ENCODE measurements at regions of chr18 and their contacts with region 1.

Region 1: DNA sequence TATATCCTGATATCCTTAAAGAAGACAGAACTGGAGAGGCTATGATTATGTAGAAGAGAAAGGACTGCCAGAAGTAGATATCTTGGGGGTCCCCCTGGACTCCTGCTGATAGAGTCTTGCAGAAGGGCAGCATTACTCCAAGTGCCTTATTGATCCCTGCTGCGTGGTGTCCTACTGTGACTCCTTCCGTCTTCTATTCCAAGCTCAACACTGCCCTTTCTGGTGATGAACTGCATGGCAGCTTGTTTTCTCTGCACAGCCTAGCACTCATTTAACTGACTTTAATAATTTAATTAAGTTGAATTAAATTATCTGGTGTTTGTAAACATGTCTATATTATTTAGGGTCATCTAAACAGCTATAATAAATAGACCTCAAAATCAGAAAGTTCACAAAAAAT is 194.1 kb upstream of the DSEL start:
- DNase-seq: peak in 1 of 2 experiments; percentile 63
- H3K4me3 ChIP-seq: no peak overlapping the region
- H3K27ac ChIP-seq: no peak overlapping the region
- H3K4me1 ChIP-seq: peaks cover 0 to 3% (median 0%) of the 10 kb centered on the region in 4 experiments; a peak in 1 of 7 replicates
- H3K27me3 ChIP-seq: no peaks in the 10 kb centered on the region
- CTCF ChIP-seq: peak; percentile 28 to 67 (median 63)
- EP300 ChIP-seq: no peak
- POLR2A ChIP-seq: no peak
- RAD21 ChIP-seq: peak; percentile 74 to 81

Region 2: GRCh38 chr18:67515945-67516538 is 194.6 kb before region 1 on chr18:
- CTCF ChIA-PET with region 1: interaction called, 46 read pairs
- POLR2A ChIA-PET with region 1: interaction called, 3 read pairs
- DNase-seq: peak in 1 of 2 experiments; percentile 91
- H3K4me3 ChIP-seq: peak overlapping the region; percentile 58 to 90 (median 82)
- H3K27ac ChIP-seq: no peak overlapping the region
- H3K4me1 ChIP-seq: peaks cover 2 to 8% (median 4%) of the 10 kb centered on the region in 4 experiments; a peak in 6 of 7 replicates
- H3K27me3 ChIP-seq: no peaks in the 10 kb centered on the region
- CTCF ChIP-seq: peak; percentile 75 to 87 (median 77)
- EP300 ChIP-seq: no peak
- POLR2A ChIP-seq: 0 out of 3 replicates have a peak, but pooled peaks of 1 of the 2 experiments have one; percentile 17
- RAD21 ChIP-seq: peak; percentile 92 to 93

Region 3: GRCh38 chr18:67568166-67568565 is 142.5 kb before region 1 on chr18:
- CTCF ChIA-PET with region 1: no interaction called
- POLR2A ChIA-PET with region 1: no interaction called
- DNase-seq: no peak
- H3K4me3 ChIP-seq: no peak overlapping the region
- H3K27ac ChIP-seq: no peak overlapping the region
- H3K4me1 ChIP-seq: peaks cover 0 to 3% (median 0%) of the 10 kb centered on the region in 4 experiments; a peak in 1 of 7 replicates
- H3K27me3 ChIP-seq: no peaks in the 10 kb centered on the region
- CTCF ChIP-seq: no peak
- EP300 ChIP-seq: no peak
- POLR2A ChIP-seq: no peak
- RAD21 ChIP-seq: no peak

Region 4: GRCh38 chr18:67766930-67767329 is 56.3 kb after region 1 on chr18:
- CTCF ChIA-PET with region 1: no interaction called
- POLR2A ChIA-PET with region 1: no interaction called
- DNase-seq: no peak
- H3K4me3 ChIP-seq: no peak overlapping the region
- H3K27ac ChIP-seq: no peak overlapping the region
- H3K4me1 ChIP-seq: peaks cover 0 to 2% (median 0%) of the 10 kb centered on the region in 4 experiments; a peak in 1 of 7 replicates
- H3K27me3 ChIP-seq: no peaks in the 10 kb centered on the region
- CTCF ChIP-seq: no peak
- EP300 ChIP-seq: no peak
- POLR2A ChIP-seq: no peak
- RAD21 ChIP-seq: no peak

Region 5: DNA sequence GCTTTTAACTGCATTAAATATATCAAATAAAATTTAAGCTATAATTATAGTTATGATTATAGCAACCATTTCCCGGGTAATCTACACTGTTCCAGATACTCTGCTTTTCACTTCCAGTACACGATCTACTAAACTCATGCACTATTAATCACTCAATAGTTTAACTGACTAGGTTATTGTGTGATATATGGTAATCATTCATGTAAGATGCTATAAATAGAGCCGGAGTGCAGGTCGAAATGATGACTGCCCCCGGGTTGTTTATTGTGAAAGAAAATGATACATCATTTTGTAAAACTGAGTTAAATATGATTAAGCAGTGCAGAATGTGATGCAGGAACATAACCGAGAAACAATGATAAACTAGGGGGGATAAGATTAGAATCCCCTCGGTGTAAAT is 240.5 kb after region 1 on chr18:
- CTCF ChIA-PET with region 1: no interaction called
- POLR2A ChIA-PET with region 1: no interaction called
- DNase-seq: no peak
- H3K4me3 ChIP-seq: no peak overlapping the region
- H3K27ac ChIP-seq: no peak overlapping the region
- H3K4me1 ChIP-seq: peaks cover 0 to 6% (median 0%) of the 10 kb centered on the region in 4 experiments; a peak in 2 of 7 replicates
- H3K27me3 ChIP-seq: no peaks in the 10 kb centered on the region
- CTCF ChIP-seq: no peak
- EP300 ChIP-seq: no peak
- POLR2A ChIP-seq: no peak
- RAD21 ChIP-seq: no peak